ENCODE measurements at regions of chr12 and their contacts with region 1.

Region 1: DNA sequence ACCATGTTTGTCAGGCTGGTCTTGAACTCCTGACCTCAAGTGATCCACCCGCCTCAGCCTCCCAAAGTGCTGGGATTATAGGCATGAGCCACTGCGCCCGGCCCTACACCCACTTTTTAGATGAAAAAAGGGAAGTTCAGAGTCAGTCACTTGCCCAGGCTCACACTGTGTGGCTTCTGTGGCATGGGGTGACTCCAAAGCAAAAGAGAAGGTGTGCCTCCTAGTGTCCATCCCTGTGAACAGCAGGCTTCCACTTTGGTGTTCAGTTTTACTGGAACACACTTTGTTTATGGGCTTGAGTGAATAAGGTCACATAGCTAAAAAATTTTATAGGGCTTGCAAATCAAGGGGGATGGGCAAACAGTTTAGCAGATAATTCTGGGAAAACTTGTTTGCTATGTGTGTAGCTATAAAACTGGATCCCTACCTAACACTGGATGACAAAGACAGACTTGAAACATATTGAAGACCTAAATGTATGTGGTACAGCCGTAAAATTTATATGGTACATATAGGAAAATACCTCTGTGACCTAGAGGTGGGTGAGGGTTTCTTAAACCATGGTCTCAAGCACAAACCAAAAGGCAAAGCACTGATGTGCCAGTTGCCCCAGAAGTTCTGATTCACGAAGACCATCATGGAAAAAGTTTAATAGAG is 54.9 kb downstream of the EID3 start:
- DNase-seq: peak; percentile 33 to 73 (median 63)
- ATAC-seq: peak; percentile 97
- H3K4me3 ChIP-seq: no peak overlapping the region
- H3K4me3 Mint-ChIP-seq: no peak overlapping the region
- H3K27ac ChIP-seq: no peak overlapping the region
- H3K27ac Mint-ChIP-seq: no peak overlapping the region
- H3K4me1 ChIP-seq: no peaks in the 10 kb centered on the region
- H3K4me1 Mint-ChIP-seq: peaks cover 0 to 13% (median 0%) of the 10 kb centered on the region in 7 donors
- H3K27me3 ChIP-seq: no peaks in the 10 kb centered on the region
- H3K27me3 Mint-ChIP-seq: no peaks in the 10 kb centered on the region

Region 2: GRCh38 chr12:103884316-103884715 is 474.2 kb before region 1 on chr12:
- CTCF ChIA-PET with region 1: interaction called, 3 read pairs
- POLR2A ChIA-PET with region 1: no interaction called
- intact Hi-C with region 1: loop called (anchors 2 to 5 kb)
- DNase-seq: peak in 7 of 9 donors; percentile 36 to 68 (median 53)
- ATAC-seq: peak; percentile 68
- H3K4me3 ChIP-seq: no peak overlapping the region
- H3K4me3 Mint-ChIP-seq: peak overlapping the region in 3 of 10 donors; percentile 30 to 64 (median 39)
- H3K27ac ChIP-seq: no peak overlapping the region
- H3K27ac Mint-ChIP-seq: peak overlapping the region in 6 of 9 donors; percentile 19 to 74 (median 46)
- H3K4me1 ChIP-seq: no peaks in the 10 kb centered on the region
- H3K4me1 Mint-ChIP-seq: peaks cover 4 to 24% (median 16%) of the 10 kb centered on the region in 7 donors
- H3K27me3 ChIP-seq: no peaks in the 10 kb centered on the region
- H3K27me3 Mint-ChIP-seq: no peaks in the 10 kb centered on the region

Region 3: GRCh38 chr12:103986829-103987228 is 371.6 kb before region 1 on chr12:
- CTCF ChIA-PET with region 1: no interaction called
- POLR2A ChIA-PET with region 1: no interaction called
- intact Hi-C with region 1: no loop called
- DNase-seq: no peak
- ATAC-seq: no peak
- H3K4me3 ChIP-seq: no peak overlapping the region
- H3K4me3 Mint-ChIP-seq: no peak overlapping the region
- H3K27ac ChIP-seq: no peak overlapping the region
- H3K27ac Mint-ChIP-seq: no peak overlapping the region
- H3K4me1 ChIP-seq: no peaks in the 10 kb centered on the region
- H3K4me1 Mint-ChIP-seq: no peaks in the 10 kb centered on the region
- H3K27me3 ChIP-seq: no peaks in the 10 kb centered on the region
- H3K27me3 Mint-ChIP-seq: no peaks in the 10 kb centered on the region

Region 4: DNA sequence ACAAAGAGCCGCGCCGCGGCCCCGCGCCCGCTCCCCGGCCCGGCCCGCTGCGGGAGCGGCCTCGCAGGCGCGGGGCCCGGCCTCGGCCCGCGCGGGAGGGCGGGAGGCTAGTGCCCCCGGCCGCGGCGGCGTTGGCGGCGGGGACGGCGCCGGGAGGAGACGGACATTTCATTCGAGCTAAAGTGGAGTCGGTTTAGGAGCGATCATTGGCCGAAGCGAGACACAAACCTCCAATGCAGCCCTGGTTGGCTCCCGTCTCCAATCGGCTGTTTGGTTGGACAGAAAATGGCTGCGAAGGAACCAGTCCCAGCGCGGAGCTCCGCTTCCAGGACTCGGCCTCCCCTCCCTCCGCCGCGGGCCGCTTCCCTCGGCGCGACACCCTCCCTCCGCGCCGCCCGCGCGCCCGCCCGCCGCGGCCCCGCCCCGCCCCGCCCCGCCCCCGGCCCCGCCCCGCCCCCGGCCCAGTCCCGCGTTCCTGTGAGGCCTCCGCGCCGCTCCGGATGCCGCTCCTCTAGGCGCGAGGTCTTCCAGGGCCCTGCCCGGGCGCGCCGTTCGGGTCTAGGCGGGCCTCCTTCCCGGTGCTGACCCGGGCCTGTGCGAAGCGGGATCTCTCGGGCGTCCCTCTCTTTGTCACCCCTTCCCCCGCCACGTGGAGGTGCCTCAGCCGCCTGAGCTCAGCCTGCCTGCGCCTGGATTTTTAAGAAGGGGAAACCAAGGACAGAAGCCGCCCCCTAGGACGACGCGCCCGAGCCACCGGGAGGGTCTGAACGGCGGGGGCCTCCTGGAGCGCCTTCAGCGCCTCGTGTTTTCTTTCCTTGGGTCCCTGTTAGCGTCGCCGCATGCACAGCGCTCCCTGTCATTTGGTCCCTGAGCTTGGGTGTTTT is 220.3 kb before region 1 on chr12 and contains the start of gene NFYB:
- CTCF ChIA-PET with region 1: no interaction called
- POLR2A ChIA-PET with region 1: no interaction called
- intact Hi-C with region 1: loop called in 1 of 2 experiments (anchors 1 kb)
- DNase-seq: peak; percentile 90 to 96 (median 94)
- ATAC-seq: peak; percentile 97
- H3K4me3 ChIP-seq: peak within 1 kb of the TSS; percentile 69
- H3K4me3 Mint-ChIP-seq: peak within 1 kb of the TSS; percentile 81 to 93 (median 90)
- H3K27ac ChIP-seq: peak within 1 kb of the TSS; percentile 72
- H3K27ac Mint-ChIP-seq: peak within 1 kb of the TSS; percentile 71 to 95 (median 89)
- H3K4me1 ChIP-seq: peaks cover 10 to 23% of the 10 kb centered on the region in 2 donors
- H3K4me1 Mint-ChIP-seq: peaks cover 0 to 22% (median 9%) of the 10 kb centered on the region in 7 donors
- H3K27me3 ChIP-seq: no peaks in the 10 kb centered on the region
- H3K27me3 Mint-ChIP-seq: peaks cover 0 to 24% (median 0%) of the 10 kb centered on the region in 5 donors
- total RNA-seq, gene NFYB: 11.6 to 25.9 (median 24.4) TPM

Region 5: DNA sequence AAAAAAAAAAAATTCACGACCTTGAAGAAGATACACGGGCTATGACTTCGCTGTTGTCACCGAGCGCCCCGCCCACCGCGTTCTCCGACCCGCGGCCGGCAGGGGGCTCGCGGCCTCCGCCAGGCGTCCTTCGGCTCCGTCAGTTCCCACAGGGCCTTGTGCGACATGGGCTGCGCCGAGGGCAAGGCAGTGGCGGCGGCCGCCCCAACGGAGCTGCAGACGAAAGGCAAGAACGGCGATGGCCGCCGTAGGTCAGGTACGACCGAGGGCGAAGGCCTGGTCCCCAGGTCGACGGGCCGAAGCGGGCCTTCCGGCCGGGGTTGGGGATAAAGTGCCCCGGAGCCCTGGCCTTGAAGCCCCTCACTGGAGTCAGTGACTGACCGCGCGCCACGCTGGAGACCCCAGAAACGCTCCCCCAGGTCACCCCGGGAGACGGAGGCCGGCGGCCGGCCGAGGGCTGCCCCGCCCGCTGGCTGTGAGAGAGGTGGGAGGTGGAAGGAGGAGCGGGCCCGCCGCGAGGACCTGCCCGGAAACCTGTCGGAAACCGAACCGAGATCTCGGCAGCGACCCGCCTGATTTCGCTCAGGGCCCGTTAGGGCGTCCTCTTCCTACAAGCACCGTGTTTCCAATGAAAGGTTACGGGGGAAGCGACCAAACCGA is 142.7 kb before region 1 on chr12 and contains the start of gene TXNRD1:
- CTCF ChIA-PET with region 1: interaction called, 4 read pairs
- POLR2A ChIA-PET with region 1: no interaction called
- intact Hi-C with region 1: loop called (anchors 1 kb)
- DNase-seq: peak; percentile 70 to 84 (median 81)
- ATAC-seq: peak; percentile 97
- H3K4me3 ChIP-seq: peak within 1 kb of the TSS; percentile 69
- H3K4me3 Mint-ChIP-seq: peak within 1 kb of the TSS; percentile 79 to 89 (median 84)
- H3K27ac ChIP-seq: peak within 1 kb of the TSS; percentile 64
- H3K27ac Mint-ChIP-seq: peak within 1 kb of the TSS; percentile 64 to 86 (median 72)
- H3K4me1 ChIP-seq: peaks cover 0 to 5% of the 10 kb centered on the region in 2 donors
- H3K4me1 Mint-ChIP-seq: peaks cover 15 to 41% (median 26%) of the 10 kb centered on the region in 7 donors
- H3K27me3 ChIP-seq: no peaks in the 10 kb centered on the region
- H3K27me3 Mint-ChIP-seq: peaks cover 0 to 8% (median 0%) of the 10 kb centered on the region in 5 donors
- total RNA-seq, gene TXNRD1: 19.1 to 73.5 (median 41.7) TPM

Measured in naive thymus-derived CD4-positive, alpha-beta T cell (primary cell).